Sigmoid colon (tissue), 7 donors: ENCODE measurements at regions of chr19 and their contacts with region 1.

Region 1: GRCh38 chr19:58362272-58362994 is at the start of gene ZNF497:
- DNase-seq: peak; percentile 98
- H3K4me3 ChIP-seq: peak within 1 kb of the TSS; percentile 69 to 78 (median 72)
- H3K27ac ChIP-seq: peak within 1 kb of the TSS; percentile 87 to 96 (median 93)
- H3K4me1 ChIP-seq: peaks cover 0 to 9% (median 3%) of the 10 kb centered on the region in 4 donors
- H3K27me3 ChIP-seq: peaks cover 0 to 10% (median 9%) of the 10 kb centered on the region in 3 donors
- CTCF ChIP-seq: peak in 1 of 4 experiments; percentile 8
- EP300 ChIP-seq: peak in 1 of 4 donors; percentile 41
- POLR2A ChIP-seq: peak; percentile 52 to 68
- total RNA-seq, gene ZNF497: 0.28 to 0.54 (median 0.43) TPM

Region 2: GRCh38 chr19:58380722-58381466 is 18.5 kb after region 1 on chr19 and contains the start of gene ZNF837:
- intact Hi-C with region 1: loop called (anchors 2 kb)
- DNase-seq: peak; percentile 100
- H3K4me3 ChIP-seq: peak within 1 kb of the TSS; percentile 75 to 93 (median 88)
- H3K27ac ChIP-seq: peak within 1 kb of the TSS; percentile 92 to 96 (median 96)
- H3K4me1 ChIP-seq: peaks cover 0 to 34% (median 25%) of the 10 kb centered on the region in 4 donors
- H3K27me3 ChIP-seq: no peaks in the 10 kb centered on the region
- CTCF ChIP-seq: no peak
- EP300 ChIP-seq: no peak
- POLR2A ChIP-seq: peak; percentile 78 to 81
- total RNA-seq, gene ZNF837: 0.66 to 2.2 (median 1.5) TPM

Region 3: DNA sequence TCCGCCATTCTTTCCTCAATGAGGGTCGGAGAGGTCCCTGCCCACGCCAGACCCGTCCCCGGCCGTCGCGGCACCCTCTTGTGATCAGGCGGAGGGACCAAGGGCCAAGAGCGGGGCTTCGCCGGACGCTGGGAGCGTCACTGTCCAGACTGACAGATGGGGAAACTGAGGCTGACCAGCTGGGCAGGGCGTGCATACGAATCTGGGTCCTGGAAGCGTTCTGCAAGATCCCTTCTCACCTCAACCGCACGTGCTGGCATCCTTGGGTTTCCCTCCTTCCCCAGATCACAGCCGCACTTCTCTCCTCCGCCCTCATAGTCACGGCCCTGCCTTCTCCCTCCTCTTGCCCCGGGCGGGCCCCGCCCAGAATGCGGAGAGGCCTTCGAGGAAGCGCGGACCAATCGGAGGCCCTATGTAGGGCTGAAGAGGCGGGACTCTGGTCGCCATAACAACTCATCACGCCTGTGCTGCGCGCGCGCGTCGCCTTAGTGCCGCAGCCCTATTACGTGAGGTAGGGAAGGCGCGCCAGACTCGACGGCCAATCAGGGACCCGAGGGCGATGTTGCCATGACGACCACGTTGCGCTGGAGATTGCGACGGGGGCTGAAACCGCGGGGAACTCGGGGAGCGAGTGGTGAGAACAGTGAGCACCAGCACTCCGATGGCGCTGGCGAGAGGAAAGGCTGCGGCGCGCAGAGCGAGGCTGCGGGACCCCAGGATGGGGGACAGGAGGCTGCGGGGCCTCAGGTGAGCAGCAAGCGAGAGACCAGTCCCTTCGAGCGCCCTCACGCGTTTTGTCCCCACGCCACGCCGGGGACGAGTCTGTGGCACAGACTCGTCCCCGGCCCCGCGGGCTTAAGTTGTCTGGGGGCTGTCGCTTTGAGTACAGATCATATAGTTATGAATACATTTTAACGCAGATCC is 38.7 kb after region 1 on chr19:
- intact Hi-C with region 1: loop called (anchors 2 kb)
- DNase-seq: peak; percentile 100
- H3K4me3 ChIP-seq: peak overlapping the region; percentile 47 to 66 (median 58)
- H3K27ac ChIP-seq: peak overlapping the region; percentile 76 to 82 (median 78)
- H3K4me1 ChIP-seq: peaks cover 0 to 24% (median 21%) of the 10 kb centered on the region in 4 donors
- H3K27me3 ChIP-seq: peaks cover 9 to 20% (median 15%) of the 10 kb centered on the region in 3 donors
- CTCF ChIP-seq: no peak
- EP300 ChIP-seq: no peak
- POLR2A ChIP-seq: peak in 1 of 2 donors; percentile 48

Region 4: GRCh38 chr19:58439576-58440554 is 77.4 kb after region 1 on chr19 and contains the start of gene ZNF132:
- intact Hi-C with region 1: loop called (anchors 2 kb)
- DNase-seq: peak; percentile 99
- H3K4me3 ChIP-seq: peak within 1 kb of the TSS; percentile 49 to 72 (median 67)
- H3K27ac ChIP-seq: peak within 1 kb of the TSS; percentile 80 to 89 (median 84)
- H3K4me1 ChIP-seq: peaks cover 0 to 23% (median 16%) of the 10 kb centered on the region in 4 donors
- H3K27me3 ChIP-seq: no peaks in the 10 kb centered on the region
- CTCF ChIP-seq: no peak
- EP300 ChIP-seq: peak in 1 of 4 donors; percentile 60
- POLR2A ChIP-seq: no peak
- total RNA-seq, gene ZNF132: 5.3 to 12.2 (median 6.4) TPM